ENCODE measurements at regions of chr22 and their contacts with region 1.

Region 1: DNA sequence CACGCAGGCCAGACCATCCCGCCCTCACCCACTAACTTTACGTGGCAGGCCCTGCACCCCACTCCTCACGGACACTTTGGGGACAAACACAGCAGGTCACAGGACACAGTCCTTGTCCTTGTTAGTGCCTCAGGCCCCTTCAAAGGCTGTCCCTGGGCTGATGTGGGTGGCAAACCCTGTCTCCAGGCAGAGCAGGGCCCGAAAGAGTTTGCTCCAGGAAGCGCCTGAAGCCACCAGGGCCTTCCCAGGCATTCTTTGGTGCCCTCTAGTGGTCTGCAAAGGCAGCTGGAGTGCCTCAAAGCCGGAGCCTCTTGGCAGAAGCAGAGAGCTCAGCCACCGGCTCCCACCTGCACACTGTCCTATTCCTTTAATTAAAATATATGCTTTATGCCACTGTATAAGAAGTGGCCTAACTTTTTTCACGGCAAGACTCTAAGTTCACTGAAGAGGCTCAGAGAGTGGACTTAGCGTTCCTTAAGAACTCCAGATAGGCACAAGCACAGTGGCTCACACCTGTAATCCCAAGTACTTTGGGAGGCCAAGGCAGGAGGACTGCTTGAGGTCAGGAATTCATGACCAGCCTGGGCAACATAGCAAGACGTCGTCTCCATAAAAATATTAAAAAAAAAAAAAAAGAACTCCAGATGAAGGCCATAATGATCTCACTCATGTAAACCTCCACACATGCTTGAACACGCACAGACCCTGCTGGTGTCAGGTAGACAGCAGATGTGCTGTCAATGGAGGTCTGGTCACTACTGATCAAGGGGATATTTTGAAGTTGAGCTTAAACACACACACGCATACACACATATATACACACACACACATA is 11.1 kb downstream of the TXN2 start:
- DNase-seq: peak; percentile 87
- H3K4me3 Mint-ChIP-seq: no peak overlapping the region
- H3K27ac Mint-ChIP-seq: peak overlapping the region; percentile 73
- H3K4me1 Mint-ChIP-seq: peaks cover 31% of the 10 kb centered on the region
- H3K27me3 Mint-ChIP-seq: no peaks in the 10 kb centered on the region

Region 2: DNA sequence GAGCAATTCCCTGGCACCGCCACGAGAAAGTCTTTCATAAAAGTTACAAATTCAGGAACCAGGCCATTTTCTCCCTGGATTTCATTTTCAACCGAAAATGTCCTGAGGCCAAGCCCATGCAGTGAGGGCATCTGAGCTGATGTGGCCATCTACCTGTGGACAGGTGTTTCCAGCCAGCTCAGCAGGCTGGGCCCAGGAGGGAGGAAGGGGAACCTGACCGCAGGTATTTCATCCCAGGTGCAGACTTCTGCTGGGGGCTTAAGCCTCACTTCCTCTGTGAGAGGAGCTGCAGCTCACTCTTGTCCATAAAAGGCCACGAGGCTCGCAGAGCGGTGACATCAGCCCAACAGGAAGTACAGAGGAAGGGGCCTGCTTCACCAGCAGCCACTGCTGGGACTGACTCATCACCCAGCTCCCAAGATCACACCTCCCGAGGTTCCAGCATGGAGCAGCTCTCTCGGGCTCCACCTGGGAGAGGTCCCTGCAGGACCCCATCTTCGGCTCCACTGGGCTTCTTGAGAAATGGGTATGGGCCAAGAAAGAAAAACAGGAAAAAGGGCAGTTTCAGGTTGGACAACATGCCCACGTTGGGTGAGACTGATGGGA is 139.0 kb before region 1 on chr22:
- CTCF ChIA-PET with region 1: interaction called, 17 read pairs
- POLR2A ChIA-PET with region 1: interaction called, 5 read pairs
- DNase-seq: peak; percentile 87
- H3K4me3 Mint-ChIP-seq: peak overlapping the region; percentile 82
- H3K27ac Mint-ChIP-seq: peak overlapping the region; percentile 100
- H3K4me1 Mint-ChIP-seq: peaks cover 98% of the 10 kb centered on the region
- H3K27me3 Mint-ChIP-seq: no peaks in the 10 kb centered on the region

Region 3: GRCh38 chr22:36365020-36365411 is 105.4 kb before region 1 on chr22:
- CTCF ChIA-PET with region 1: interaction called, 10 read pairs
- POLR2A ChIA-PET with region 1: interaction called, 3 read pairs
- DNase-seq: peak; percentile 90
- H3K4me3 Mint-ChIP-seq: peak overlapping the region; percentile 51
- H3K27ac Mint-ChIP-seq: peak overlapping the region; percentile 85
- H3K4me1 Mint-ChIP-seq: peaks cover 97% of the 10 kb centered on the region
- H3K27me3 Mint-ChIP-seq: no peaks in the 10 kb centered on the region

Region 4: GRCh38 chr22:36387752-36388518 is 82.4 kb before region 1 on chr22 and contains the start of gene MYH9:
- CTCF ChIA-PET with region 1: interaction called, 12 read pairs
- POLR2A ChIA-PET with region 1: interaction called, 11 read pairs
- DNase-seq: peak; percentile 100
- H3K4me3 Mint-ChIP-seq: peak within 1 kb of the TSS; percentile 84
- H3K27ac Mint-ChIP-seq: peak within 1 kb of the TSS; percentile 95
- H3K4me1 Mint-ChIP-seq: peaks cover 46% of the 10 kb centered on the region
- H3K27me3 Mint-ChIP-seq: no peaks in the 10 kb centered on the region
- total RNA-seq, gene MYH9: 840 to 865 TPM

Region 5: DNA sequence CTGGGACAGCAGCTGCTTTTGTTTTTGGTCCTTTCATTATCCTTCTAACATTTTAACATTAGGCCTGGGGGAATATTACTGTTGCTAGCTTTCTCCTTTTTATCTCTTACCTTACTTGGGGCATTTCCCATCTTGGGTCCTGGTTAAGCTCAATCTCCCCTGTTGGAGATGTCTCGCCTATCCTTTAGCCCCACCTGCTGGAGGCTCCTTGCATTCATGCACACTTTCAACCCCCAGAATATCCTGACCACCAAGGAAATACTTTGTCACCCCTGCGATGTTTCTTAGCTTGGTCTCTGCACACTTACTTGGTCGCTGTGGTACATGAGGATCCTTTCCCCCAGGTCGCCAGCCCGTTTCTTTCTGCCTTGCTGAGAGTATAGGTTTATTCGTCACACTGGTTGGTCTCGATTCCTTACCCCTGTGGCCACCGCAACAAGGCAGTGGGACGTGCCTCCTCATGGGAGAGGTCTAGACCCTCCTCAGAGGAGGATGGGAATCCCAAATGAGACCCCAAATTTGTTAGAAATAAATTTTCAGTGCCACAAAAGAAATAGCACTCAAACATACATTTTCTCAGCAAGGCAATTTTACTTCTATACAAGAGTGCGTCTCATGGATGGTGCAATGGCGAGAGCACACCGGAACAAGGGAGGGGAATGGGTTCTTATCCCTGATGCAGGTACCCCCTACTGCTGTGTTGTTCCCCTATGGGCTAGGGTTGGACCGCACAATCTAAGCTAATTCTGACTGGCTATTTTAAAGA is 16.4 kb after region 1 on chr22:
- CTCF ChIA-PET with region 1: interaction called, 14 read pairs
- POLR2A ChIA-PET with region 1: interaction called, 4 read pairs
- DNase-seq: peak; percentile 66
- H3K4me3 Mint-ChIP-seq: no peak overlapping the region
- H3K27ac Mint-ChIP-seq: no peak overlapping the region
- H3K4me1 Mint-ChIP-seq: peaks cover 7% of the 10 kb centered on the region
- H3K27me3 Mint-ChIP-seq: no peaks in the 10 kb centered on the region

Measured in activated CD4-positive, alpha-beta memory T cell treated with anti-CD3 and anti-CD28 coated beads, Interleukin-2, amount 10 ng/mL, durations not matched to agents 7 days and 5 days (primary cell).